CD4-positive, alpha-beta memory T cell (primary cell): ENCODE measurements at regions of chr3 and their contacts with region 1.

Region 1: GRCh38 chr3:15332405-15333098 is at the start of gene SH3BP5:
- DNase-seq: peak; percentile 69 to 79 (median 74)
- H3K4me3 ChIP-seq: peak within 1 kb of the TSS; percentile 39 to 97
- H3K4me3 Mint-ChIP-seq: peak within 1 kb of the TSS; percentile 91 to 98 (median 98)
- H3K27ac ChIP-seq: peak within 1 kb of the TSS; percentile 79
- H3K27ac Mint-ChIP-seq: peak within 1 kb of the TSS; percentile 94 to 96 (median 94)
- H3K4me1 ChIP-seq: peaks cover 54% of the 10 kb centered on the region
- H3K4me1 Mint-ChIP-seq: peaks cover 35 to 64% (median 53%) of the 10 kb centered on the region in 4 donors
- H3K27me3 ChIP-seq: no peaks in the 10 kb centered on the region
- H3K27me3 Mint-ChIP-seq: no peaks in the 10 kb centered on the region
- total RNA-seq, gene SH3BP5: 55.8 to 56.9 TPM

Region 2: DNA sequence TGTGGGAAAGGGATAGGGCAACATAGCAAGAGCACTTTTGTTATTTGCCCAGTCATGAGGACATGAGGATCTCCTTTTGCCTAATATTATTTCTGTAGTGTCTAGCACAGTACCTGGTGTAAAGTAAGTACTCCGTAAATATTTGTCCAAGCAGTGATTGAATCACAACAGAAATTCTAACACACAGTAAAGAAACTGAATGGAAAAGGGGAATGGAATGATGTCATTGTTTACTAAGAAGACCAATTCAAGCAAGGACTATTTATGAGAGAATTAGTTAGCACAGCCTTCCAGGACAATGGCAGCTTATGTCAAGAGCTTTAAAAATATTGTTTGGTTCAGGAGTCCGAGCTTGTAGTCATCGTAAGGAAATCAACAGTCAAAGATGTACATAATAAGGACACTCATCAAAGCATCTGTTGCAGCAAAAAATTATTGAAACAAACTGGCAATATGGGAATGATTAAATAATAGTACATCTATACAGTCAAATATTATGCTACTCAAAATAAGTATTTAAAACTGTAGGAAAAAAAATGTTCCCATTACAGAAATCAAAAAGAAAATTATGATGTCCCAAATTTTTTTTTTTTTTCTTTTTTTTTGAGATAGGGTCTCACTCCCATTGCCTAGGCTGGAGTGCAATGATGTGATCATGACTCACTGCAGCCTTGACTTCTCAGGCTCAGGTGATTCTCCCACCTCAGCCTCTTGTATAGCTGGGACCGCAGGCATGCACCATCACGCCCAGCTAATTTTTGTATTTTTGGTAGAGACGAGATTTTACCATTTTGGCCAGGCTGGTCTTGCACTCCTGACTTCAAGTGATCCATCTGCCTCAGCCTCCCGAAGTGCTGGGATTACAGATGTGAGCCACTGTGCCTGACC is 108.6 kb before region 1 on chr3:
- CTCF ChIA-PET with region 1: no interaction called
- POLR2A ChIA-PET with region 1: no interaction called
- intact Hi-C with region 1: no loop called
- DNase-seq: no peak
- H3K4me3 ChIP-seq: no peak overlapping the region
- H3K4me3 Mint-ChIP-seq: no peak overlapping the region
- H3K27ac ChIP-seq: no peak overlapping the region
- H3K27ac Mint-ChIP-seq: peak overlapping the region in 2 of 7 donors; percentile 19 to 72
- H3K4me1 ChIP-seq: no peaks in the 10 kb centered on the region
- H3K4me1 Mint-ChIP-seq: peaks cover 1 to 12% (median 7%) of the 10 kb centered on the region in 4 donors
- H3K27me3 ChIP-seq: no peaks in the 10 kb centered on the region
- H3K27me3 Mint-ChIP-seq: no peaks in the 10 kb centered on the region

Region 3: GRCh38 chr3:15291589-15292541 is 40.7 kb before region 1 on chr3:
- CTCF ChIA-PET with region 1: interaction called, 15 read pairs
- POLR2A ChIA-PET with region 1: interaction called, 12 read pairs
- intact Hi-C with region 1: loop called (anchors 5 kb)
- DNase-seq: peak; percentile 78 to 92 (median 80)
- H3K4me3 ChIP-seq: peak overlapping the region; percentile 21 to 42
- H3K4me3 Mint-ChIP-seq: peak overlapping the region; percentile 76 to 85 (median 80)
- H3K27ac ChIP-seq: peak overlapping the region; percentile 70
- H3K27ac Mint-ChIP-seq: peak overlapping the region; percentile 91 to 97 (median 92)
- H3K4me1 ChIP-seq: peaks cover 93% of the 10 kb centered on the region
- H3K4me1 Mint-ChIP-seq: peaks cover 72 to 98% (median 85%) of the 10 kb centered on the region in 4 donors
- H3K27me3 ChIP-seq: no peaks in the 10 kb centered on the region
- H3K27me3 Mint-ChIP-seq: no peaks in the 10 kb centered on the region

Region 4: GRCh38 chr3:15309662-15310335 is 22.8 kb before region 1 on chr3:
- CTCF ChIA-PET with region 1: interaction called, 10 read pairs
- POLR2A ChIA-PET with region 1: interaction called, 25 read pairs
- intact Hi-C with region 1: loop called (anchors 1 kb)
- DNase-seq: no peak
- H3K4me3 ChIP-seq: no peak overlapping the region
- H3K4me3 Mint-ChIP-seq: peak overlapping the region in 7 of 8 donors; percentile 25 to 77 (median 56)
- H3K27ac ChIP-seq: peak overlapping the region; percentile 11
- H3K27ac Mint-ChIP-seq: peak overlapping the region; percentile 63 to 84 (median 80)
- H3K4me1 ChIP-seq: peaks cover 89% of the 10 kb centered on the region
- H3K4me1 Mint-ChIP-seq: peaks cover 55 to 86% (median 69%) of the 10 kb centered on the region in 4 donors
- H3K27me3 ChIP-seq: no peaks in the 10 kb centered on the region
- H3K27me3 Mint-ChIP-seq: no peaks in the 10 kb centered on the region

Region 5: DNA sequence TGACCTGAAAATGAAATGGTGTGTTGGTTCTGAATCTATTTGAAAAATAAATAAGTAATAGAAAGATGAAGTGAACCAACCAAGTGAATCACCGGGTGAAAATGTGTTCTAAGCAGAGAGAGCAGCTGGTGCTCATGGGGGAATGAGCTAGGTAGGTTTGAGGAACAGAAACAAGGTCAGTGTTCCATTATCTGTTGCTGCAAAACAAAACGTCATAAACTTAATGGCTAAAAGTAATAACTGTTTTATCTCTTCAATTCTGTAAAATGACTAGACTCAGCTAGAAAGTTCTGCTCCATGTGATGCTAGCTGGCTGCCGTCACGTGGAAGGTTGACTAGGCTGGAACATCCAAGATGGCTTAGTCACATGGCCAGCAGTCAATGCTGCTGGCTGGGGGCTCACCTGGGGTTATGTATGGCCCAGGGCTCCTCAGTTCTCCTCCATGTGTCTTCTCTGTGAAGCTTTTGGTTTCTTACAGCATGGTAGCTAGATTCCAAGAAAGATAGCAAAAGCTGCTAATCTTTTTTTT is 13.1 kb after region 1 on chr3:
- CTCF ChIA-PET with region 1: interaction called, 51 read pairs
- POLR2A ChIA-PET with region 1: interaction called, 33 read pairs
- intact Hi-C with region 1: loop called (anchors 1 kb)
- DNase-seq: peak in 2 of 5 donors; percentile 21 to 31
- H3K4me3 ChIP-seq: no peak overlapping the region
- H3K4me3 Mint-ChIP-seq: peak overlapping the region in 6 of 8 donors; percentile 23 to 70 (median 41)
- H3K27ac ChIP-seq: no peak overlapping the region
- H3K27ac Mint-ChIP-seq: peak overlapping the region; percentile 36 to 91 (median 71)
- H3K4me1 ChIP-seq: peaks cover 64% of the 10 kb centered on the region
- H3K4me1 Mint-ChIP-seq: peaks cover 51 to 79% (median 67%) of the 10 kb centered on the region in 4 donors
- H3K27me3 ChIP-seq: no peaks in the 10 kb centered on the region
- H3K27me3 Mint-ChIP-seq: no peaks in the 10 kb centered on the region

Region 6: GRCh38 chr3:15361494-15362212 is 29.1 kb after region 1 on chr3:
- CTCF ChIA-PET with region 1: interaction called, 16 read pairs
- POLR2A ChIA-PET with region 1: interaction called, 20 read pairs
- intact Hi-C with region 1: loop called (anchors 2 kb)
- DNase-seq: peak in 1 of 5 donors; percentile 39
- H3K4me3 ChIP-seq: no peak overlapping the region
- H3K4me3 Mint-ChIP-seq: peak overlapping the region in 7 of 8 donors; percentile 56 to 92 (median 73)
- H3K27ac ChIP-seq: peak overlapping the region; percentile 36
- H3K27ac Mint-ChIP-seq: peak overlapping the region; percentile 86 to 93 (median 89)
- H3K4me1 ChIP-seq: peaks cover 54% of the 10 kb centered on the region
- H3K4me1 Mint-ChIP-seq: peaks cover 28 to 59% (median 37%) of the 10 kb centered on the region in 4 donors
- H3K27me3 ChIP-seq: no peaks in the 10 kb centered on the region
- H3K27me3 Mint-ChIP-seq: no peaks in the 10 kb centered on the region

Region 7: GRCh38 chr3:15557511-15557946 is 225.0 kb after region 1 on chr3:
- CTCF ChIA-PET with region 1: no interaction called
- POLR2A ChIA-PET with region 1: no interaction called
- intact Hi-C with region 1: loop called (anchors 5 kb)
- DNase-seq: peak; percentile 67 to 82 (median 79)
- H3K4me3 ChIP-seq: no peak overlapping the region
- H3K4me3 Mint-ChIP-seq: peak overlapping the region in 2 of 8 donors; percentile 9 to 59
- H3K27ac ChIP-seq: no peak overlapping the region
- H3K27ac Mint-ChIP-seq: peak overlapping the region; percentile 5 to 75 (median 62)
- H3K4me1 ChIP-seq: peaks cover 19% of the 10 kb centered on the region
- H3K4me1 Mint-ChIP-seq: peaks cover 17 to 23% (median 20%) of the 10 kb centered on the region in 4 donors
- H3K27me3 ChIP-seq: no peaks in the 10 kb centered on the region
- H3K27me3 Mint-ChIP-seq: no peaks in the 10 kb centered on the region